CD4-positive, alpha-beta memory T cell (primary cell): ENCODE measurements at regions of chr10 and their contacts with region 1.

Region 1: GRCh38 chr10:99620713-99621453 is 644 bp upstream of the SLC25A28 start:
- DNase-seq: peak; percentile 76 to 97 (median 88)
- H3K4me3 ChIP-seq: peak overlapping the region; percentile 24 to 71
- H3K4me3 Mint-ChIP-seq: peak overlapping the region; percentile 81 to 96 (median 92)
- H3K27ac ChIP-seq: peak overlapping the region; percentile 93
- H3K27ac Mint-ChIP-seq: peak overlapping the region; percentile 90 to 98 (median 97)
- H3K4me1 ChIP-seq: peaks cover 47% of the 10 kb centered on the region
- H3K4me1 Mint-ChIP-seq: peaks cover 33 to 60% (median 43%) of the 10 kb centered on the region in 4 donors
- H3K27me3 ChIP-seq: no peaks in the 10 kb centered on the region
- H3K27me3 Mint-ChIP-seq: no peaks in the 10 kb centered on the region

Region 2: GRCh38 chr10:98446661-98447221 is 1174.1 kb before region 1 on chr10 and contains the start of gene HPS1:
- CTCF ChIA-PET with region 1: no interaction called
- POLR2A ChIA-PET with region 1: no interaction called
- intact Hi-C with region 1: loop called (anchors 5 kb)
- DNase-seq: peak; percentile 64 to 78 (median 78)
- H3K4me3 ChIP-seq: peak within 1 kb of the TSS; percentile 73 to 84
- H3K4me3 Mint-ChIP-seq: peak within 1 kb of the TSS; percentile 88 to 95 (median 94)
- H3K27ac ChIP-seq: peak within 1 kb of the TSS; percentile 76
- H3K27ac Mint-ChIP-seq: peak within 1 kb of the TSS; percentile 89 to 95 (median 93)
- H3K4me1 ChIP-seq: peaks cover 41% of the 10 kb centered on the region
- H3K4me1 Mint-ChIP-seq: peaks cover 29 to 58% (median 42%) of the 10 kb centered on the region in 4 donors
- H3K27me3 ChIP-seq: no peaks in the 10 kb centered on the region
- H3K27me3 Mint-ChIP-seq: no peaks in the 10 kb centered on the region
- total RNA-seq, gene HPS1: 106 to 115 TPM

Region 3: DNA sequence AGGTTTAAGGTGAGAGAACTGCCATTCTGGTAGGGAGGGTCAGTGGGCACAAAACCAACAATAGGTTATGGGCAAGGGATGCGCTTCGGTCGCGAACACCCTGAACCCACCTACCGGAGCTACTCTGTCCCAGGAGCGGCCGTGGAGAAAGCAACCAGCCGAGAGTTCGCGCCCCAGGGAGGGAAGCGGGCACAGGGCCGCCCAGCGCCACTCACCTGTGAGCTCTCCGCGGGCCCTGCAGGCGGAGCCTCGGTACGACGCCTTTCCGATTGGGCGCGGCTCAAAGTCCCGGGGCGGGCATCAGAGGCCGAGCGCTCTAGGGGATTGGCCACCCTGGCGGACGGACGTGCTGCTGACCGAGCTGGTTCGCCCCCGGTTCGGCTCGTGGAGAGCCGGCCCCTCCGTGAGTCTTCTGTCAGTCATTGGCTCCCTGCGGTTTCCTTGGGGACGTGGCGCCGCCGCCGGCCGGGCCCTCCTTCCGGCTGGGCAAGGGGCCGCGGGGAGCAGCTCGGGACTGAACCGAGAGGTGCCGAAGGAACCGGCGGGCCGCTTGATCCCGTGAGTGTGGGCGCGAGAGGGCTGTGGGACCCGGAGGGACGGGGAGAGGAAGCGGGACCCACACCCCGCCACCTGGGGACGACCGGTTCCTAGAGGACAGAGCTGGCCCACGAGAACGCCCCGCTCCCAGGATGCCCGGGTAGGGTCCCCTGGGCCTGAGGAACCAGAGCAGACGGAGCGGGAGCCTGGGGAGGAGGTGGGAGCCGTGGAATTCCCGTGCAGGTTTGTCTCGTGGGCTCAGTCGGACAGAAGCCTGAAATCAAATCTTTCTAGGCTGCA is 38.4 kb after region 1 on chr10 and contains the start of gene ENTPD7:
- CTCF ChIA-PET with region 1: interaction called, 3 read pairs
- POLR2A ChIA-PET with region 1: interaction called, 40 read pairs
- intact Hi-C with region 1: loop called (anchors 1 kb)
- DNase-seq: peak; percentile 84 to 87 (median 85)
- H3K4me3 ChIP-seq: peak within 1 kb of the TSS; percentile 63 to 84
- H3K4me3 Mint-ChIP-seq: peak within 1 kb of the TSS; percentile 87 to 95 (median 91)
- H3K27ac ChIP-seq: peak within 1 kb of the TSS; percentile 66
- H3K27ac Mint-ChIP-seq: peak within 1 kb of the TSS; percentile 54 to 93 (median 84)
- H3K4me1 ChIP-seq: peaks cover 17% of the 10 kb centered on the region
- H3K4me1 Mint-ChIP-seq: peaks cover 16 to 27% (median 20%) of the 10 kb centered on the region in 4 donors
- H3K27me3 ChIP-seq: no peaks in the 10 kb centered on the region
- H3K27me3 Mint-ChIP-seq: peaks cover 7 to 19% of the 10 kb centered on the region in 2 donors
- total RNA-seq, gene ENTPD7: 3.7 to 3.9 TPM

Region 4: GRCh38 chr10:99732033-99732912 is 111.4 kb after region 1 on chr10 and contains the starts of genes COX15 and CUTC:
- CTCF ChIA-PET with region 1: no interaction called
- POLR2A ChIA-PET with region 1: interaction called, 33 read pairs
- intact Hi-C with region 1: loop called (anchors 1 kb)
- DNase-seq: peak; percentile 94 to 95 (median 95)
- H3K4me3 ChIP-seq: peak within 1 kb of the TSS; percentile 82 to 98
- H3K4me3 Mint-ChIP-seq: peak within 1 kb of the TSS; percentile 97 to 100 (median 100)
- H3K27ac ChIP-seq: peak within 1 kb of the TSS; percentile 91
- H3K27ac Mint-ChIP-seq: peak within 1 kb of the TSS; percentile 97 to 100 (median 99)
- H3K4me1 ChIP-seq: peaks cover 44% of the 10 kb centered on the region
- H3K4me1 Mint-ChIP-seq: peaks cover 22 to 56% (median 39%) of the 10 kb centered on the region in 4 donors
- H3K27me3 ChIP-seq: no peaks in the 10 kb centered on the region
- H3K27me3 Mint-ChIP-seq: no peaks in the 10 kb centered on the region
- total RNA-seq, gene COX15: 31.1 to 32.1 TPM
- total RNA-seq, gene CUTC: 29.8 to 35.8 TPM

Region 5: GRCh38 chr10:100535715-100536353 is 915.0 kb after region 1 on chr10 and contains the start of gene HIF1AN:
- CTCF ChIA-PET with region 1: no interaction called
- POLR2A ChIA-PET with region 1: no interaction called
- intact Hi-C with region 1: loop called (anchors 5 kb)
- DNase-seq: peak; percentile 92 to 95 (median 94)
- H3K4me3 ChIP-seq: peak within 1 kb of the TSS; percentile 48 to 69
- H3K4me3 Mint-ChIP-seq: peak within 1 kb of the TSS in 1 of 8 donors; percentile 40
- H3K27ac ChIP-seq: peak within 1 kb of the TSS; percentile 77
- H3K27ac Mint-ChIP-seq: peak within 1 kb of the TSS in 3 of 7 donors; percentile 8 to 87 (median 32)
- H3K4me1 ChIP-seq: peaks cover 34% of the 10 kb centered on the region
- H3K4me1 Mint-ChIP-seq: peaks cover 12 to 23% (median 18%) of the 10 kb centered on the region in 4 donors
- H3K27me3 ChIP-seq: no peaks in the 10 kb centered on the region
- H3K27me3 Mint-ChIP-seq: no peaks in the 10 kb centered on the region
- total RNA-seq, gene HIF1AN: 69.6 to 69.8 TPM